Adrenal gland (tissue), 19 donors: ENCODE measurements at regions of chr3 and their contacts with region 1.

Region 1: DNA sequence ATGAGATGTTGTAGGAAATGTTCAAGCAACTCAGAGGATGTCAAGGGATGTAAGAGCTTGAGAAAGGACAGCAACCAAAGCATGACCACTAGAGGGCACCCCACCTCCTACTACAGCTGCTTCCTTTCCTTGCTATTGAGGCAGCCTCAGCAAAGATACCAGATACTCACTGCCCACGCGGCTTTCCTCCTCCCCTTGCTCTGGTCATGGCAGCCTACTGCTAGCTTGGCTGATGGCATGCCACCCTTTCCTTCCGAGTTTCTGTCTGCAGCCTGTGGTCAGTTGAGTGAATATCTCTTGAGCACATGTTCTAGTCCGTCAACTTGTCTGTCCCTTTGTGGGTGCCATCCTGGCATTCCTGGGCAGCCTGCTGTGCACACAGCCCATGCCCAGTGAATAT is 4.4 kb upstream of the CXCR6 start:
- DNase-seq: peak; percentile 83 to 96 (median 91)
- H3K4me3 ChIP-seq: no peak overlapping the region
- H3K27ac ChIP-seq: no peak overlapping the region
- H3K4me1 ChIP-seq: no peaks in the 10 kb centered on the region
- H3K27me3 ChIP-seq: no peaks in the 10 kb centered on the region
- CTCF ChIP-seq: peak; percentile 88 to 96 (median 90)
- POLR2A ChIP-seq: no peak

Region 2: GRCh38 chr3:46078712-46079400 is 140.0 kb after region 1 on chr3:
- intact Hi-C with region 1: loop called (anchors 2 kb)
- DNase-seq: peak; percentile 86 to 98 (median 94)
- H3K4me3 ChIP-seq: no peak overlapping the region
- H3K27ac ChIP-seq: no peak overlapping the region
- H3K4me1 ChIP-seq: no peaks in the 10 kb centered on the region
- H3K27me3 ChIP-seq: no peaks in the 10 kb centered on the region
- CTCF ChIP-seq: peak; percentile 87 to 100 (median 98)
- POLR2A ChIP-seq: no peak

Region 3: GRCh38 chr3:46163318-46164041 is 224.6 kb after region 1 on chr3:
- intact Hi-C with region 1: no loop called
- DNase-seq: no peak
- H3K4me3 ChIP-seq: no peak overlapping the region
- H3K27ac ChIP-seq: no peak overlapping the region
- H3K4me1 ChIP-seq: no peaks in the 10 kb centered on the region
- H3K27me3 ChIP-seq: no peaks in the 10 kb centered on the region
- CTCF ChIP-seq: no peak
- POLR2A ChIP-seq: no peak

Region 4: GRCh38 chr3:46386206-46386605 is 447.3 kb after region 1 on chr3:
- intact Hi-C with region 1: loop called in 1 of 2 experiments (anchors 10 kb)
- DNase-seq: no peak
- H3K4me3 ChIP-seq: no peak overlapping the region
- H3K27ac ChIP-seq: no peak overlapping the region
- H3K4me1 ChIP-seq: no peaks in the 10 kb centered on the region
- H3K27me3 ChIP-seq: peaks cover 6% of the 10 kb centered on the region
- CTCF ChIP-seq: no peak
- POLR2A ChIP-seq: no peak